Aorta (tissue), 5 donors: ENCODE measurements at regions of chr12 and their contacts with region 1.

Region 1: DNA sequence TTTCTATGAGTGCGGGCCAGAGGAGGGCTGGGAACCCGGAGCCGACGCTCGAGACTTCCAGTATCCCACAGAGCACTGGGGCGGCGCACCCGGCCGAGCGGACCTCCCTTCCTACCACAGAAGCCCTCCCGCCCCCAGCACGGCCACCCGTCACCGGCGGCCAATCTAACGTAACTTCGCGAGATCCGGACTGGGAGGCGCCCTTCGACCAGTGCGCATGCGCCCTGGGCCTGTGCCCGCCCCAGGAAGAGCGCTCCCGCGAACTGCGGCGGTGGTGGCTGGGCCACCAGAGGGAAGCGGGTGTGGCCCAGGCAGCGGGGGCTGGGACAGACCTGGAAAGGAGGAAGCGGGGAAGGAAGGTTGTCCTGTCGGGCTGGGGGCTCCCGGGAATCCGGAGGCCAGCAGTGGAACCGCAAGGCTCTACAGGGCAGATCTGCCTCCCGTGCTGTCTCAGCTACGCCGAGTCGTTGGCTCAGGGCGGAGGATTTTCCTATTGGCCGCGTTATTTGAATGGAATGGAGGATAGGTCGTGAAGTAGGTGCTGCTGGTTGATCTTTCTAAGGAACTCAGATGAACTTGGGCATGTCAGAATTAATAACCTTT is at the start of gene PPP1R12A:
- DNase-seq: peak; percentile 99
- ATAC-seq: peak; percentile 99
- H3K4me3 ChIP-seq: peak within 1 kb of the TSS; percentile 80 to 97
- H3K27ac ChIP-seq: peak within 1 kb of the TSS; percentile 91 to 96
- H3K4me1 ChIP-seq: peaks cover 0 to 2% of the 10 kb centered on the region in 2 donors
- H3K27me3 ChIP-seq: no peaks in the 10 kb centered on the region
- total RNA-seq, gene PPP1R12A: 194 to 287 TPM

Region 2: GRCh38 chr12:79420146-79420618 is 514.9 kb before region 1 on chr12:
- intact Hi-C with region 1: loop called in 1 of 2 experiments (anchors 10 kb)
- DNase-seq: no peak
- ATAC-seq: peak; percentile 46
- H3K4me3 ChIP-seq: no peak overlapping the region
- H3K27ac ChIP-seq: peak overlapping the region in 1 of 2 donors; percentile 36
- H3K4me1 ChIP-seq: peaks cover 1 to 8% of the 10 kb centered on the region in 2 donors
- H3K27me3 ChIP-seq: no peaks in the 10 kb centered on the region

Region 3: GRCh38 chr12:79818856-79819255 is 116.3 kb before region 1 on chr12:
- intact Hi-C with region 1: loop called (anchors 10 kb)
- DNase-seq: no peak
- ATAC-seq: peak; percentile 48
- H3K4me3 ChIP-seq: no peak overlapping the region
- H3K27ac ChIP-seq: peak overlapping the region in 1 of 2 donors; percentile 67
- H3K4me1 ChIP-seq: peaks cover 0 to 3% of the 10 kb centered on the region in 2 donors
- H3K27me3 ChIP-seq: no peaks in the 10 kb centered on the region

Region 4: GRCh38 chr12:79911889-79912656 is 23.0 kb before region 1 on chr12:
- intact Hi-C with region 1: no loop called
- DNase-seq: no peak
- ATAC-seq: peak; percentile 58
- H3K4me3 ChIP-seq: peak overlapping the region in 1 of 2 donors; percentile 18
- H3K27ac ChIP-seq: peak overlapping the region; percentile 37 to 84
- H3K4me1 ChIP-seq: peaks cover 2 to 9% of the 10 kb centered on the region in 2 donors
- H3K27me3 ChIP-seq: no peaks in the 10 kb centered on the region

Region 5: GRCh38 chr12:80033448-80033847 is 98.3 kb after region 1 on chr12:
- intact Hi-C with region 1: loop called in 1 of 2 experiments (anchors 5 kb)
- DNase-seq: peak in 1 of 2 donors; percentile 38
- ATAC-seq: peak; percentile 82
- H3K4me3 ChIP-seq: no peak overlapping the region
- H3K27ac ChIP-seq: no peak overlapping the region
- H3K4me1 ChIP-seq: peaks cover 3 to 6% of the 10 kb centered on the region in 2 donors
- H3K27me3 ChIP-seq: no peaks in the 10 kb centered on the region

Region 6: DNA sequence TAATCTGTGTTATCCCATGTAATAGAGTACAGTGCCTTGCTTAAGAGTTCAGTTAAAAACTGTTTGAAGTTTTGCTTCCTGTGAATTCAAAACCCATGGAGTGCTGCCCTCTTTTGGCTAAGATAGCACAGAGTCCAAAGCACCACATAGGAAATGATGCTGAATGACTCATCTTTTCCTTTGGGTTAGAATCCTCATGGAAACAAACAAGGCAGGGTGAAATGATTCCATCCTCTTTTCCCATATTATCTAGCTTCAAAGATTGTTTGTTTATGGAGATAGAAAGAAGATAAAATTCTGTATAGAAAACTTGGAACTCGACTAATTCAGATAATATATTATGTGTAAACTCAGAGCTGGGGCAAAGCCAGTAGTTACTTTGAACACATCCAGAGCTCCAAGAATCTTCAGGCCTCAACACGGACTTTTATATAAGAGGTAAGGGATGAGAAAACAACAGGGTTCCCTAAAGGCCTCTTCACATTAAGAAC is 251.7 kb after region 1 on chr12:
- intact Hi-C with region 1: loop called (anchors 5 kb)
- DNase-seq: no peak
- ATAC-seq: peak; percentile 92
- H3K4me3 ChIP-seq: peak overlapping the region in 1 of 2 donors; percentile 45
- H3K27ac ChIP-seq: peak overlapping the region; percentile 80 to 84
- H3K4me1 ChIP-seq: peaks cover 0 to 3% of the 10 kb centered on the region in 2 donors
- H3K27me3 ChIP-seq: no peaks in the 10 kb centered on the region